Lower leg skin (tissue), 4 donors: ENCODE measurements at regions of chr19 and their contacts with region 1.

Region 1: GRCh38 chr19:33795370-33796163 is 1.1 kb upstream of the KCTD15 start:
- DNase-seq: peak; percentile 63 to 94
- H3K4me3 ChIP-seq: peak overlapping the region; percentile 54
- CTCF ChIP-seq: no peak
- POLR2A ChIP-seq: no peak

Region 2: DNA sequence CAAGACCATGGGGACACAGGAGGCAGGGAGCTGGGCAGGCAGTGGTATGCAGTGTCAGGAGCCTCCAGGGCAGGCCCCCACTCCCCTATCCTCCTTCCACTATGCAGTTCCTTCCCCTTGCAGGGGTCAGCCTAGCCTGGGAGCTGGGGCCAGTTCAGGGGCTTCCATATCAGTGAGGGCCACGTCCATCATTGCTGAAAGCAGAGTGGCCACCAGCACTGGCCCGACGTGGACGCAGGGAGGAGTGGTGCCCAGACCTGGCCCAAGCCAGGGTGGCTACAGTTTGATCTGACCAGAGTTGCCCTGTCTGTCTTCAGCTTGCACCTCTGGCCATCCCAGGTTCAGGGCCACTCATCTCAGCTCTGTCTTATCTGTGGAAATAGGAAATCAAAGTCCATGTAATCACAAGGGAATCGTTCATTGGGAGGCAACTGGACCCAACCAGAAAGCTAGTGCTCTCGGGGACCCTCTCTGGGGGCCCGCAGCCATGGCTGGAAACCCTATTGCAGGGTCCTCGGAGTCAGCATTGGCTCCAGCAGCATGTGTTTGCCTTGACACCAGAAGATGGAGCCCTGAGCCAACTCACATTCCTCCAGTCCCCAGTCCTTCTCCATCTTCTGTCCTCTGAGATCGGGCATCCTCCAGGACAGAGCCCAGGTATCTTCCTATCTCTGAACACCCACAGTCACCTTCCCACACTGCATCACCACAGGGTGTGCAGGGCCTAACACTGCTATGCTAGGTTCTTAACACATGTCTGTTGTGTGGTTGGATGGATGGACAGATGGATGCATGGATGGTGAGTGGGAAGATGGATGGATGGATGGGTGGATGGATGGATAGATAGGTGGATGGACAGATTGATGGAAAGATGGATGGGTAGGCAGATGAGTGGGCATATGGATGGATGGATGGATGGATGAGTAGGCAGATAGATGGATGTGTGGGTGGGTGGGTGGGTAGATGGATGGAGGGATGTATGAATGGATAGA is 74.6 kb before region 1 on chr19:
- intact Hi-C with region 1: no loop called
- DNase-seq: no peak
- H3K4me3 ChIP-seq: no peak overlapping the region
- CTCF ChIP-seq: no peak
- POLR2A ChIP-seq: no peak

Region 3: GRCh38 chr19:33879818-33880575 is 84.4 kb after region 1 on chr19:
- intact Hi-C with region 1: loop called (anchors 10 kb)
- DNase-seq: no peak
- H3K4me3 ChIP-seq: no peak overlapping the region
- CTCF ChIP-seq: no peak
- POLR2A ChIP-seq: no peak

Region 4: DNA sequence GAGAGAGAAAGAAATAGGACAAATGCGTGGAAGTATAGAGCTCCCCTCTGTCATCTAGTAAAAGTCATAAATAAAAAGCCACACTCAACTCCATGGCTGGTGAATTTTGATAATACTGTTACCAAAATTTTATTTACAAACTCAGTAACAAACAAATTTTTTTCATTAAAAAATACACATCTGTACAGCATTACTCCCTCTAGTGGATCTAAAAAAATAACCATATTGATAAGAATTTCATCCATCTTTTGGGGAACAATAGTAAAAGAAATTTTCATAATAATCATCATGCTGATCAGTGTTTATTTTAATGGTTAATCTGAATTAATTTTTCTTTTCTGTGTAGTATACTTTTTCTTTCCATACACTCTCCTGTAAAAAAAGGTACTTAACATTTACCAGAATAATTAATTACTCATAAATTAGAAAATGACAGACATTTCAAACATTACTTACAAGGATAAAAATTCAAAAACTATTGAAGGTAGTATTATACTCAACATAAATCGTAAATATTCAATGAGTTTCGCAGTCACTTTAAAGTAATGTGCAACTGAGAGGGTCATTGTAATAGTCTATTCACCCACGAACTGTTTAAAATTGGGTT is 203.3 kb after region 1 on chr19:
- intact Hi-C with region 1: loop called (anchors 5 kb)
- DNase-seq: no peak
- H3K4me3 ChIP-seq: no peak overlapping the region
- CTCF ChIP-seq: no peak
- POLR2A ChIP-seq: no peak